HEK293 (cell line): ENCODE measurements at regions of chr19 and their contacts with region 1.

Region 1: DNA sequence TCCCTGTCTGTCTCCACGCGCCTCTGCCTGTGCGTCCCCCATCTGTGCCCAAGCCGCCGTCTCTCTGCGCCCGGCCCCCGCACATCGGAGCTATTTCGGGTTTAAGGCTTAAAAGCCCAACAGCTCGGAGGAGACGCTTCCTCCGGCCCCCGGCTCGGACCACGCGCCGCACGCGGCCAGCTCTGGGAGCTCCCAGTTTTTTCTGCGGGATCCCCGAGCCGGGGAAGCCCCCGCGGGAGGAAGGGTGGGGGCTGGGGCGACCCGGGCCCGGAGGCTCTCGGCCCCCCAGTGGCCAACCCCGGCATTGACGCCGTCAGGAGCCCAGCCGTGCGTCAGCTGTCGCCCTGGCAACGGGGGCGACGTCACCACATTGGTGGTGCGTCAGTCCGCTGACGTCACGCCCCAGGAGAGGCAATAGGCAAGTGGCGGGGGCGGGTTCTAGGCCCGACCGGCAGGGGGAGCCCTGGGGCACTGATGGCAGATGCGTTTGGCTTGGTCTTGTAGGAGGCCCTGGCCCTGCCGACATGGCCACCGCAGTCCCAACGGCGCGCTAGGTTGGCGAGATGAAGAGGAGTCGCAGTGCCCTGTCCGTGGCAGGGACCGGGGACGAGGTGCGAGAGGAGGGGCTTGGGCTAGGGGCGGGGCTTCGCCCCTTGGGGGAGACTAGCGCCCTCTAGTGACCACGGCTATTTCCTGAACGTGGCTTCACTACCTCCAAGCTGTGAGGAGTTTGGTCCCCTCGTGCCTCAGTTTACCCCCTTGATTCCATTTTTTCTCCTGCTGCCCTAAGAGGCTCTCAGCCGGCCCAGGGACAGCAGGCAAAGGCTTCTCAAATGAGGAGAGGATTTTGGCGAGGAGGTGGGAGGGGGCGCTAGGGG is 3.7 kb upstream of the PDE4A start:
- H3K4me3 ChIP-seq: peak overlapping the region; percentile 51
- H3K27ac ChIP-seq: peak overlapping the region; percentile 44; the same call in 1 of the 2 replicates
- H3K4me1 ChIP-seq: peaks cover 8% of the 10 kb centered on the region; the same call in 1 of the 2 replicates
- CTCF ChIP-seq: peak; percentile 100

Region 2: GRCh38 chr19:10292206-10292788 is 124.3 kb before region 1 on chr19:
- CTCF ChIA-PET with region 1: interaction called, 13 read pairs
- POLR2A ChIA-PET with region 1: interaction called, 3 read pairs
- H3K4me3 ChIP-seq: peak overlapping the region; percentile 43
- H3K27ac ChIP-seq: peak overlapping the region; percentile 6; the same call in 1 of the 2 replicates
- H3K4me1 ChIP-seq: peaks cover 4% of the 10 kb centered on the region; the same call in 1 of the 2 replicates
- CTCF ChIP-seq: no peak

Region 3: GRCh38 chr19:10403137-10404021 is 13.2 kb before region 1 on chr19 and contains the start of gene CDC37:
- CTCF ChIA-PET with region 1: interaction called, 193 read pairs
- POLR2A ChIA-PET with region 1: interaction called, 5 read pairs
- H3K4me3 ChIP-seq: peak within 1 kb of the TSS; percentile 99
- H3K27ac ChIP-seq: peak within 1 kb of the TSS; percentile 73
- H3K4me1 ChIP-seq: peaks cover 8% of the 10 kb centered on the region
- CTCF ChIP-seq: no peak

Region 4: DNA sequence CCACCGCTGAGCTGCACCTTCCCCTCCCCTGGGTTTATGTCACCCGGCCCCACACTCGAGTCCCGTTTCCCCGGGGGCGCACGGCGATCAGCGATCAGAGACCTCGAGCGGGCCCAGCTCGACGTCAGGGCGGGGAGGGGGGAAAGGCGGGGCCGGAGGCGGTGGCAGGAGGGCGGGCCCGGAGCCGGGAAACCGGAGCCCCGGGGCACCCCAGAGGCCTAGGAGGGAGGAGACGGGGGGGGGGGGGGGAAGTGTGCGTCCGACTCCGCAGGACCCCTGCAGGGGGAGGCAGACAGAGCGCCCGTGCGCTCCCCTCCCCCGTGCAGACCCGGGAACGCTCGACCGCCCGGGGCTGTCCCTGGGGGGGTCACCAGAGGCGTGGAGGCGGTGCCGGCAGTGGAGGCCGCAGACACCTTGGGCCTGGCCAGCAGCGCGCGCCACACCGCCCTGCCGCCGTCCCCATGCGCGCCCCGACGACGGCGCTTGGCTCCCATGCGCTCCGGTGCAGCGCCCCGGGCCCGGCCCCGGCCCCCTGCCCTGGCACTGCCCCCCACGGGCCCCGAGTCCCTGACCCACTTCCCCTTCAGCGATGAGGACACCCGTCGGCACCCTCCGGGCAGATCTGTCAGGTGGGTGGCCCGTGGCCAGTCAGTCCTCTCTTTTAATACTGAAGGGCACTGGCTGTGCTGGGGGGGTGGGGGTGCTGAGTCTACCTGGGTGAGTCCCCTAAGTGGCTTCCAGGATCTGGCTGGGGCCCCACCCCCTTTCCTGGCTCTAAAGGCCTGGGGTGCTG is 15.5 kb after region 1 on chr19:
- CTCF ChIA-PET with region 1: interaction called, 71 read pairs
- POLR2A ChIA-PET with region 1: no interaction called
- H3K4me3 ChIP-seq: no peak overlapping the region
- H3K27ac ChIP-seq: no peak overlapping the region
- H3K4me1 ChIP-seq: no peaks in the 10 kb centered on the region
- CTCF ChIP-seq: no peak

Region 5: GRCh38 chr19:10450853-10451609 is 34.4 kb after region 1 on chr19:
- CTCF ChIA-PET with region 1: interaction called, 13 read pairs
- POLR2A ChIA-PET with region 1: interaction called, 3 read pairs
- H3K4me3 ChIP-seq: no peak overlapping the region
- H3K27ac ChIP-seq: no peak overlapping the region
- H3K4me1 ChIP-seq: no peaks in the 10 kb centered on the region
- CTCF ChIP-seq: no peak

Region 6: DNA sequence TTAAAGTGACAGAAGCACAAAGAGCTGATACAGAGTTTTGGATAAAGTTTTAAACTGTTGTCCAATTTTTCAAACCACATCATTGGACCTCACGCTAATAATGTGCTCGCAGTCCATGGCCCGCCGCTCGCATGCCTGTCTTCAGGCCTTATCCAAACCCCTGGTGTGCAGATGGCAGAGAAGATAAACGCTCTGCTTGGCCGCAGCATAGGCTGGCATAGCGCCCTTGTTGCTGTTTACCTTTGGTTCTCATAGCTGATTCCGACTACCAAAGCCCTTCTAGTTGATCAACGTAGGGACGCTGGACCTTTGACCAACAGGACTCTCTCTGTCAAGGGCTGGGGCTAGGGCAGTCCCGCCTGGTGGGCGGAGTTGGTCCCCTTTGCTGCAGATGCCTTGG is 261.1 kb after region 1 on chr19:
- CTCF ChIA-PET with region 1: no interaction called
- POLR2A ChIA-PET with region 1: no interaction called
- H3K4me3 ChIP-seq: no peak overlapping the region
- H3K27ac ChIP-seq: no peak overlapping the region
- H3K4me1 ChIP-seq: no peaks in the 10 kb centered on the region
- CTCF ChIP-seq: no peak